H1 (cell line): ENCODE measurements at regions of chr13 and their contacts with region 1.

Region 1: DNA sequence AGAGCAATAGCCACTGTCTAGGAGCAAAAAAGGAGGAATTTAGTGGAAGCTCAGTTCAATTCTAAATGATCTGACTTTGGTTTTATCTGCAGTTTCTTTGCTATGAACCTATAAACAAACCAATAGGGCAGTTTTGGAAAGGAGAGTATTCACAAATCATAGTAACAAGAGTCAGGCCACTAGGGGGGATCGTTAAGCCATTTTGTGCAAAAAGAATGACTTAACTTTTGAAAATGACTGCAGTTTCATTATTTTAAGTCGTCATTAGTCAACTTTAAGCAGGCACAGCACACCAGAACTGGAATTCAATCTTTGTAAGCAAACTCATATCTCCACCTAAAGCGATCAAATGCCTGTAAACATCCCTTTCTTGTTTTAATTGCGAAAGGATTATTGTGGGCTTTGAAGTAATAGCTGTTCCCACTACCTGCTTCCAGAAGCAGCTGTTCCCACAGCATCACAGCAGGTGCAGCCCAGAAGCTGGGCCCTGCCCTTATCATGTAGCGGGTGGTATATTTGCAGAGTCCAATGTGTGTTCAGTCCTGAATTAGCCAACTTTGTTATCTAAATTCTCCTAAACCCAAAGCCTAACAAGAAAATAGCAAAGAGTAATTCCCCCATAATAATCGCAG is 51.5 kb downstream of the SOX21 start:
- DNase-seq: no peak
- H3K4me3 ChIP-seq: peak overlapping the region in 1 of 4 experiments; percentile 5; a peak in 1 of 8 replicates
- H3K27ac ChIP-seq: no peak overlapping the region
- H3K4me1 ChIP-seq: peaks cover 0 to 9% (median 6%) of the 10 kb centered on the region in 4 experiments; a peak in 4 of 7 replicates
- H3K27me3 ChIP-seq: no peaks in the 10 kb centered on the region
- CTCF ChIP-seq: peak in 2 of 3 experiments; percentile 8 to 50; a peak in 2 of 4 replicates
- EP300 ChIP-seq: no peak
- POLR2A ChIP-seq: no peak
- RAD21 ChIP-seq: peak; percentile 48 to 58

Region 2: DNA sequence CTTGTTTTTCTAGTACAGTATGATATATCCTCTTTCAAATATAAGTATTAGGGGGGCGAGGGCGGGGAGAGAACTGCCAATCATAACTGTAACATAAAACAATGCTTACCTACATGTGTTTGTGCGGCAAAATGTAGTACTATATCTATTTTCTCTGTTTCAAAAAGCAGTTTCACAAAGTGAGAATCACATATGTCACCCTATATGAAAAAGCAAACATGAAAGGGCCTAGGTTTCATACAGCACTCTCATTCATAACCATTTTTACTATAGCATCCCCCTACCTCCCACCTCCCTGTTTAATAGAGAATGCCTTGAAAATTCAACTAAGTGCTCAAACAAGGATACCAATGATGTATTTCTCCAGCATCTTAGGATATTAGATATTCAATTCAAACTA is 70.1 kb before region 1 on chr13:
- CTCF ChIA-PET with region 1: no interaction called
- POLR2A ChIA-PET with region 1: no interaction called
- DNase-seq: no peak
- H3K4me3 ChIP-seq: no peak overlapping the region
- H3K27ac ChIP-seq: no peak overlapping the region
- H3K4me1 ChIP-seq: peaks cover 0 to 8% (median 6%) of the 10 kb centered on the region in 4 experiments; a peak in 3 of 7 replicates
- H3K27me3 ChIP-seq: no peaks in the 10 kb centered on the region
- CTCF ChIP-seq: no peak
- EP300 ChIP-seq: no peak
- POLR2A ChIP-seq: no peak
- RAD21 ChIP-seq: no peak

Region 3: DNA sequence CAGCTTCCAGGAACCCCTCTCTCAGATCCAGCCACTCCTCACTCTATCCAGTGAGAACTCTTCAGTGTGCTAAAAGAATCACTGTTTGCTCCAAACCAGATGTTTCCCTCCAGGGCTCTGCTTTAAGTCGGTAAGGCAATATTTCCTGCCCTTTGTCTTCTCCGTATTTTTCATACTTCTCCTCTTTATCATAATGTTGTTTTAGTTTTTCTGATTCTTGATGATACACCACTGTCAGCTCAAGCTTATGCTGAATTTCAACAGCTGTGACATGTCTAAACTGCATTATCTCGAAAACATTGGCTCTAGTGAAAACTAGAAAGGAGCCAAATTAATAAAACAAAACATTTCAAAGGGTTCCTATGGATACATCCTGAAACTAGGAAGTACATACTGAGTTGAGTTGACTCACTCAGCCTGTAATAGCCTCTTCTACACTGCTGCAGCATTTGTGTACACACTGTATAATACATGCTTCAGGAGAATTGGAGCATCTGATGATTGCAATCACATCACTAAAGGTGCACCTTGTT is 19.3 kb before region 1 on chr13:
- CTCF ChIA-PET with region 1: interaction called, 17 read pairs
- POLR2A ChIA-PET with region 1: no interaction called
- DNase-seq: no peak
- H3K4me3 ChIP-seq: no peak overlapping the region
- H3K27ac ChIP-seq: no peak overlapping the region
- H3K4me1 ChIP-seq: no peaks in the 10 kb centered on the region
- H3K27me3 ChIP-seq: no peaks in the 10 kb centered on the region
- CTCF ChIP-seq: no peak
- EP300 ChIP-seq: no peak
- POLR2A ChIP-seq: no peak
- RAD21 ChIP-seq: no peak

Region 4: DNA sequence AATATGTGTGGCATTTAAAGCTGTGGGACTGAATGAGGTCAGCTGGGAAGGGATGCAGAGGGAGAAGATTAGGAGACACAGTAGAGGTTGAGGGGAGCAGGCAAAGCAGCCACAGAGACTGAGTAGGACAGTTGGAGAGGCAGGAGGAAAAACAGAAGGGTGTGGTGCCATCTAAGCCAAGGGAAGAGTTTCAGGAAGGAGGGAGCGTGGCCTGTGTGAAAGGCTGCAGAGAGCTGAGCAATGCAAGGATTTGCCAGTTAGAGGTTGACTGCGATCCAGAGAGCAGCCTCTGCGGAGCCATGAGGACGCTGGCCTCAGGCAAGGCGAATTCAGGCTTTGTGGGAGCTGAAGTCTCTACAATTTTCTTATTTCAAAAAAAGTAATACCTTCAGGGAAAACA is 22.6 kb after region 1 on chr13:
- CTCF ChIA-PET with region 1: interaction called, 24 read pairs
- POLR2A ChIA-PET with region 1: no interaction called
- DNase-seq: no peak
- H3K4me3 ChIP-seq: no peak overlapping the region
- H3K27ac ChIP-seq: no peak overlapping the region
- H3K4me1 ChIP-seq: peaks cover 0 to 4% (median 1%) of the 10 kb centered on the region in 4 experiments; a peak in 2 of 7 replicates
- H3K27me3 ChIP-seq: no peaks in the 10 kb centered on the region
- CTCF ChIP-seq: no peak
- EP300 ChIP-seq: no peak
- POLR2A ChIP-seq: no peak
- RAD21 ChIP-seq: no peak

Region 5: DNA sequence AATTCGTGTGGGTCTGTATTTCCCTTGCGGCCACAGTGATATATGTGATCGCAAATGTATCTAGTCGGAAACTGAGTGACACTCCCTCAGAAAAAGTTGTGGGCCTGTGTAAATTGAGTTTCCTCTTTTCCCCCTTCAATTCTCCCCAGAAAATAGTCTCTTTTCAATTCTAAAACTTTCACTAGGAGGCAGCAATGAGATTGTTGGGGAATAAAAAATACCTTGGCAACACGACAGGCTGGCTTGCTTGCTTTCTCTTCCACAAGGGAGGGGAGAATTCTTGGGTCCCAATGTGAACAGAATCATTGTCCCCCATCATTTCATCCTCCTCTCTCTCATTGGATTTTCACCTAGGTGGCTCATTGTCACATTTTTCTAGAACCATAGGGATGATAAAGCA is 55.2 kb after region 1 on chr13:
- CTCF ChIA-PET with region 1: interaction called, 14 read pairs
- POLR2A ChIA-PET with region 1: interaction called, 3 read pairs
- DNase-seq: no peak
- H3K4me3 ChIP-seq: no peak overlapping the region
- H3K27ac ChIP-seq: no peak overlapping the region
- H3K4me1 ChIP-seq: peaks cover 0 to 10% (median 4%) of the 10 kb centered on the region in 4 experiments; a peak in 5 of 7 replicates
- H3K27me3 ChIP-seq: peaks cover 0 to 33% (median 25%) of the 10 kb centered on the region in 4 experiments; a peak in 6 of 7 replicates
- CTCF ChIP-seq: peak in 2 of 3 experiments; percentile 24 to 34; a peak in 2 of 4 replicates
- EP300 ChIP-seq: no peak
- POLR2A ChIP-seq: no peak
- RAD21 ChIP-seq: peak; percentile 62 to 76

Region 6: GRCh38 chr13:95156208-95156607 is 495.4 kb after region 1 on chr13:
- CTCF ChIA-PET with region 1: interaction called, 16 read pairs
- POLR2A ChIA-PET with region 1: no interaction called
- DNase-seq: no peak
- H3K4me3 ChIP-seq: no peak overlapping the region
- H3K27ac ChIP-seq: no peak overlapping the region
- H3K4me1 ChIP-seq: peaks cover 0 to 10% (median 3%) of the 10 kb centered on the region in 4 experiments; a peak in 3 of 7 replicates
- H3K27me3 ChIP-seq: peaks cover 0 to 3% (median under 1%) of the 10 kb centered on the region in 4 experiments; a peak in 4 of 7 replicates
- CTCF ChIP-seq: peak in 2 of 3 experiments; percentile 3 to 4; a peak in 1 of 4 replicates
- EP300 ChIP-seq: no peak
- POLR2A ChIP-seq: no peak
- RAD21 ChIP-seq: peak; percentile 57 to 64